Activated CD4-positive, alpha-beta memory T cell treated with anti-CD3 and anti-CD28 coated beads for 36 hours (primary cell): ENCODE measurements at regions of chr21 and their contacts with region 1.

Region 1: GRCh38 chr21:38766987-38767722 is 38.6 kb upstream of the ETS2 start:
- DNase-seq: peak; percentile 80
- H3K4me3 Mint-ChIP-seq: peak overlapping the region; percentile 69
- H3K27ac Mint-ChIP-seq: peak overlapping the region; percentile 90
- H3K4me1 Mint-ChIP-seq: peaks cover 49% of the 10 kb centered on the region
- H3K27me3 Mint-ChIP-seq: peaks cover 9% of the 10 kb centered on the region

Region 2: GRCh38 chr21:37563641-37564340 is 1203.4 kb before region 1 on chr21:
- CTCF ChIA-PET with region 1: no interaction called
- POLR2A ChIA-PET with region 1: no interaction called
- intact Hi-C with region 1: loop called (anchors 5 kb)
- DNase-seq: peak; percentile 94
- H3K4me3 Mint-ChIP-seq: peak overlapping the region; percentile 93
- H3K27ac Mint-ChIP-seq: peak overlapping the region; percentile 100
- H3K4me1 Mint-ChIP-seq: peaks cover 25% of the 10 kb centered on the region
- H3K27me3 Mint-ChIP-seq: no peaks in the 10 kb centered on the region

Region 3: DNA sequence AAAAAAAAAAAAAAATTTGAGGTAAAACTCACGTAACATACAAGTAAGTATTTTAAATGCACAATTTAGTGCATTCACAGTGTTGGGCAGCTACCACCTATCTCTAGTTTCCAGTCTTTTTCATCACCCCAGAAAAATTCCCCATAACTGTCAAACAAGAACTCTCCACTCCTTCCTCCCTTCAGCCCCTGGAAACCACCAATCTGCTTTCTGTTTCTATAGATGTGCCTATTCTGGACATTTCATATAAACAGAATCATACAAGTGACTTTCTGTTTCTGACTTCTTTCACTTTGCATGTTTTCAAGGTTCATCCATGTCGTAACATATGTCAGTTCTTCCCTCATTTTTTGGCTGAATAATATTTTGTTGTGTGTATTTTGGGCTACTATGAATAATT is 13.7 kb after region 1 on chr21:
- CTCF ChIA-PET with region 1: interaction called, 5 read pairs
- POLR2A ChIA-PET with region 1: interaction called, 5 read pairs
- intact Hi-C with region 1: loop called (anchors 1 kb)
- DNase-seq: no peak
- H3K4me3 Mint-ChIP-seq: no peak overlapping the region
- H3K27ac Mint-ChIP-seq: peak overlapping the region; percentile 35
- H3K4me1 Mint-ChIP-seq: peaks cover 44% of the 10 kb centered on the region
- H3K27me3 Mint-ChIP-seq: peaks cover 7% of the 10 kb centered on the region

Region 4: GRCh38 chr21:38831526-38832467 is 64.6 kb after region 1 on chr21:
- CTCF ChIA-PET with region 1: no interaction called
- POLR2A ChIA-PET with region 1: no interaction called
- intact Hi-C with region 1: loop called (anchors 1 kb)
- DNase-seq: peak; percentile 76
- H3K4me3 Mint-ChIP-seq: no peak overlapping the region
- H3K27ac Mint-ChIP-seq: peak overlapping the region; percentile 69
- H3K4me1 Mint-ChIP-seq: peaks cover 16% of the 10 kb centered on the region
- H3K27me3 Mint-ChIP-seq: peaks cover 6% of the 10 kb centered on the region

Region 5: DNA sequence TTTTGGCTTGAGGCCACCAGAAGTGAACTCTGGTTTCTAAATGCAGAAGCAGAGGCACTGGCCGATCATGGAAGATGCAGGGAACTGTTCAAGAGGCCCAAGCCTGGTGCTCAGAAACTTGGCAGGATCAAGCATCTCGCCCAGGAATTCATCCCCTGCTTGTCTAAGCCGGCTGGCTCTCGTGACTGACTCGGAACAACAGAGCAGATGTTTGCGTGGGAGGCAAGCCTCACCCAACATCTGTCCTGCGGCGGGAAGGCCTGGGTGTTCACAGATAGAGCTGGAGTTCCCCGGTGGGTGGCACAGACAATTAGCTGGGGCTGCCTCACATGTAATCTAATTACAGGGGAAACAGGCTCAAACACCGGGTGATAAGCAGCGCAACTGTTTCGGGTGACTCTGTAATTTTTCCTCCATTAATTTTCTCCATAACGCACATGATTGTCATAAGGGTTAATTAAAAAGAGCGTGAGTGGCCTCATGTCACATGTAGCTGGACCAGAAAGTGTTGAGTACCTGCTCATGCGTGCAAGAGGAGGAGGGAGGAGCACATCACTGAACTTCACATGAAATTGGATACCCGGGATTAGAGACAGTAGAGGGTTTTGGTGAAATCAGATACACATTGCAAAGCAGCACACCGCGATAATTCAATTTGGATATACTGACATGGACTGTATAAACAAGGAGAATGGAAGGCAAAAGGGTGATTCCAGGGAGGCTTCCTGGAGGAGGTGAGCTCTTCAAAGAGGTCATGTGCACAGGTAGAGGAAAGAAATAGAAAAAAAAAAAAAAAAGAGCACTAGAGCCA is 218.6 kb after region 1 on chr21:
- CTCF ChIA-PET with region 1: interaction called, 3 read pairs
- POLR2A ChIA-PET with region 1: no interaction called
- intact Hi-C with region 1: loop called (anchors 1 kb)
- DNase-seq: peak; percentile 76
- H3K4me3 Mint-ChIP-seq: no peak overlapping the region
- H3K27ac Mint-ChIP-seq: peak overlapping the region; percentile 32
- H3K4me1 Mint-ChIP-seq: peaks cover 18% of the 10 kb centered on the region
- H3K27me3 Mint-ChIP-seq: peaks cover 57% of the 10 kb centered on the region

Region 6: DNA sequence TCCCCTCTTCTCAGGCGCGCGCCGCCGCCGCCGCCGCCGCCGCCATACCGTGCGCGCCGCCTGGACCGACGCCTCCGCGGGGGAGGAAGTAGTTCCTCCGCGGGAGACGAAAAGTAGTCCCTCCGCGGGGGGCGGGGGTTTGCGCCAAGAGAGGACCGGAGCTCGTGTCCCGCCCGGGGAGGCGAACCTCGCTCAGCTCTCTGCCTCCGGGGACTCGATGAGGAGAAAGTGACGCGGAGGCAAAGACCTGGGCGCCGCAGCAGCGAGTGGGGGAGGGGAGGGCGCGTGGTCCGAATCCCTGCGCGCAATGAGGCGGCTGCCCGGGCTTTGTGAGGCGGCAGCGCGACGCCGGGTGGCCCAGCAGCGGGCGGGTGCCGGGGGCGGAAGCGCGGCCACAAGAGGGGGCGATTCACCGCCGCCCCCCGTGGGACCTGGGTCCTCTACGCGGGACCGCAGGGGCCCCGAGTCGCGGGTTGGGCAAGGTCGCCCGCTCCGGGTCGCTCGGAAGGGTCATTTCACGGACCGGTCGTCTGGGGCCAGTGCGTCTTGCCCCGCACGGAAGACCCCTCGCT is 546.5 kb after region 1 on chr21 and contains the start of gene BRWD1:
- CTCF ChIA-PET with region 1: no interaction called
- POLR2A ChIA-PET with region 1: no interaction called
- intact Hi-C with region 1: loop called (anchors 1 kb)
- DNase-seq: peak; percentile 80
- H3K4me3 Mint-ChIP-seq: peak within 1 kb of the TSS; percentile 92
- H3K27ac Mint-ChIP-seq: peak within 1 kb of the TSS; percentile 97
- H3K4me1 Mint-ChIP-seq: peaks cover 36% of the 10 kb centered on the region
- H3K27me3 Mint-ChIP-seq: no peaks in the 10 kb centered on the region
- total RNA-seq, gene BRWD1: 28.7 to 29.4 TPM